ENCODE measurements at regions of chr6 and their contacts with region 1.

Region 1: DNA sequence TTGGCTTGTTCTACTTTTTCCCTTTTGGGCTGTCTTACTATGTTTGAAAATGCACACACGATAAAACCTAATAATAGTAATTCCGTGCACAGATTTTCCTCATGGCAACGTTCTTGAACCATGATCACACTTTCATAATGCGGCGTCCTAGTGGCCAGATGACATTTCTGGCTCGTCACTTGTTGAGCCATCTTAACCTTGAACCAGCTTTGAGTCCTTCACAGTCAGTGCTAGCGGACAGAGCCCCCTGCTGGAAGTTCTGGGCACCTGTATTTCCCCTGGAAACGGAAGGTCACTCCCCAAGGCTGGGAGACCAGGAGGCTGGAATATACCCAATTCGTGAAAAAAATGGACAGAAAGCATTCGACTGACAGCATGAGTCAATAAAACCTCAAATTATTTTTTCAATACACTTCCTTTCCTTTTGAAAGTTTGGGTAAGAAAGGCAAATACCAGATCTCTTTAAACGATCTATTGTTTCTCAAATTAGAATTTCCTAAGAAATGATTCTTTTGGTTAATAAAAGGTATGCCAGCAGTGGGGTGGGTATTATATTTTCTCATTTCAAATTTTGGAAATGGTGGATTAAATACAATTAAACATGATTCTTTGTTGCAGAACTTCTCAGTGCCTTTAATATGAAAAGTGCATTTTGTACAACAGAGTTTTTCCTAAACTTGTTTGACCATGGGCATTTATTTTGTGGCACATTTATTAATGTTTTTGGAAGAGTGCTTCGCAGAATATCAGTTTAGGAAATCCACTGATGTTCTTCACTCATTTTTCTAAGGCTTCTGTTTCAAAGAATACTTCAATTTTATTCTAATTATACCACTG is 542.3 kb downstream of the QKI start:
- DNase-seq: peak; percentile 36
- H3K4me3 ChIP-seq: no peak overlapping the region
- H3K27ac ChIP-seq: no peak overlapping the region
- H3K4me1 ChIP-seq: no peaks in the 10 kb centered on the region
- H3K27me3 ChIP-seq: no peaks in the 10 kb centered on the region
- CTCF ChIP-seq: peak; percentile 56 to 75

Region 2: DNA sequence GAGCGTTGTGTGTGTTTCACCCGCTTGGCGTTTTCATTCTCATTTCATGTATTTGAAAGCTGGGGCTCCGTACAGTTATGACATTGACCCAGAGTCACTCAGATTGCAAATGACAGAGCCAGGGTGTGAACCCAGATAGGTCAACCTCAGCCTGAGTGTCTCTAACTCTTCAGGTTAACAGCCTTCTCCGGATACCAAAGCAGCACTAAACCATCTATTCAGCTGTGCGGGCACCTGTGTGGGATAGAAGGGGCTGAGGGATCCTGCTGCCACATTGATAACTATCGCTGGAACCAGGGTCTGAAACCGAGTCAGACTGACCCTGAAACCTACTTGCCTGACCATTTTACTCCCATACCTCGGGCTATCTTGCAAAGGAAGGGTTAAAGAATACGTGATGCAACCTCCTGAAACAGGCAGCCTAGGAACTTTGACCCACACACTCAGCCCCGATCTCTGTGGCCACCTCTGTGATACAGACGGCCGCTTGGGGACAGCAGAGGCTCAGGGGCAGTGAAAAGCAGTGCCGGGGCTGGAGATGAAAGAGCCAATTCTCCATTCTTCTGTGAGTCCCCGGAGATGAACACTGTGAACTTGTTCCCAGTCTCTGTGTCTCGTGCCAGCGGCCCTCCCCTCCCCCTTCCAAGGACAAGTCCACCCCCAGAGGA is 775.8 kb before region 1 on chr6:
- CTCF ChIA-PET with region 1: no interaction called
- dilution Hi-C with region 1: no loop called
- in situ Hi-C with region 1: no loop called
- intact Hi-C with region 1: loop called (anchors 5 kb)
- DNase-seq: peak; percentile 2
- H3K4me3 ChIP-seq: no peak overlapping the region
- H3K27ac ChIP-seq: no peak overlapping the region
- H3K4me1 ChIP-seq: no peaks in the 10 kb centered on the region
- H3K27me3 ChIP-seq: no peaks in the 10 kb centered on the region
- CTCF ChIP-seq: no peak

Region 3: GRCh38 chr6:164086076-164086887 is 129.5 kb after region 1 on chr6:
- CTCF ChIA-PET with region 1: no interaction called
- dilution Hi-C with region 1: no loop called
- in situ Hi-C with region 1: no loop called
- intact Hi-C with region 1: no loop called
- DNase-seq: no peak
- H3K4me3 ChIP-seq: no peak overlapping the region
- H3K27ac ChIP-seq: no peak overlapping the region
- H3K4me1 ChIP-seq: no peaks in the 10 kb centered on the region
- H3K27me3 ChIP-seq: no peaks in the 10 kb centered on the region
- CTCF ChIP-seq: no peak